ENCODE measurements at regions of chr1 and their contacts with region 1.

Region 1: DNA sequence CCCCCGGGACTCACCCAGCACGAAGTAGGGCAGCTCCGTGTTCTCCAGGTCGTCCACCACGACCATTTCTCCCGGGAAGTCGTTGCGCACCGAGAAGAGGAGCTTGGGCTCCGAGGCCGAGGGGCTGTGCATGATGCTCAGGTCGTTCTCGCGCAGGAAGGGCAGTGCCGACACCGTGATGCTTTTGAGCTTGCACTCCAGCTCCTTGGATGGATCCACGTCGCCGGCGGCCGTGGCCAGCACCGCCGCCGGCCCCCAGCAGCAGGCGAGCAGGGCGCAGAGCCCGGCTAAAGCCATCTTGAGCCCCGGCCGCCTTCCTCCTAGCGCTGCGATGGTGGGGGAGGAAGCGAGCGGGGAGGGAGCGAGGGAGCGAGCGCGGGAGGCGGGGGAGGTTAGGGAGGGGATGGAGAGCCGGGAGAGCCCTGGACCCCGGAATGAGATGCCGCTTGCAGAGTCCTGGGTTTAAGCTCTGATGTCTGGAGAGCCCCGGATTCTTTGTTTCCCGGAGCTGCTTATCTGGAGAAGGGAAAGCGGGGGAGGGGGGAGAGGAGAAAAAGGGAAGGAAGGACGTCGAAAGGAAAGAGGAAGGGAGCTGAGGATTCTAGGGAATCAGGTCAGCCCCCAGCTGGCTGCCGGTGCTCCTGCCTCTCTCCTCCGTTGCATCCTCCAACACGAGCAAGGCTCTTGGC is at the start of gene ASTN1:
- DNase-seq: peak in 1 of 2 experiments; percentile 78
- H3K4me3 ChIP-seq: peak within 1 kb of the TSS; percentile 80 to 86 (median 82)
- H3K27ac ChIP-seq: no peak within 1 kb of the TSS
- H3K4me1 ChIP-seq: peaks cover 0 to 5% (median 4%) of the 10 kb centered on the region in 4 experiments; a peak in 4 of 7 replicates
- H3K27me3 ChIP-seq: peaks cover 7 to 42% (median 34%) of the 10 kb centered on the region in 4 experiments
- CTCF ChIP-seq: no peak
- EP300 ChIP-seq: no peak
- POLR2A ChIP-seq: no peak
- RAD21 ChIP-seq: 0 out of 4 replicates have a peak, but pooled peaks of 1 of the 2 experiments have one; percentile 2
- total RNA-seq, gene ASTN1: 4.1 and 4.3 TPM in 2 replicates

Region 2: GRCh38 chr1:177106614-177107354 is 57.7 kb before region 1 on chr1:
- CTCF ChIA-PET with region 1: no interaction called
- POLR2A ChIA-PET with region 1: no interaction called
- DNase-seq: no peak
- H3K4me3 ChIP-seq: no peak overlapping the region
- H3K27ac ChIP-seq: no peak overlapping the region
- H3K4me1 ChIP-seq: no peaks in the 10 kb centered on the region
- H3K27me3 ChIP-seq: no peaks in the 10 kb centered on the region
- CTCF ChIP-seq: no peak
- EP300 ChIP-seq: no peak
- POLR2A ChIP-seq: no peak
- RAD21 ChIP-seq: no peak

Region 3: DNA sequence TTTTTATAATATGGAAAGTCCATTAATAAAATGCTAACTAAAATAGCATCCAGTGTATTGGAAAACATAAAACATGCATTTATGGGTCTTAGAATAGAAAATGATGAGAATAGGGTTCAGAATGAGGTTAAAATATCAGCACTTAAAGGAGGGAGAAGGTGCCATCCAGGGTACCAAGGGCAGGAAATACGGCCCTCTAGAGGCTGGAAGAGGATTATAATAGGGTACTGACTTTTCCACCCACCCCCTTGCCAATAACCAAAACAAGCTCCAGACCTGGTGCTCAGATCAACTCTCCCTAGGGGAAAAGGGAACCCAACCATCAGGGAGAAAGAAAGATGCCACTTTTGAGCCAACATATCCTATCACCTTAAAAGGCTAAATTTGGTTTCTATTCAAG is 26.7 kb before region 1 on chr1:
- CTCF ChIA-PET with region 1: interaction called, 13 read pairs
- POLR2A ChIA-PET with region 1: interaction called, 3 read pairs
- DNase-seq: no peak
- H3K4me3 ChIP-seq: no peak overlapping the region
- H3K27ac ChIP-seq: no peak overlapping the region
- H3K4me1 ChIP-seq: peaks cover 0 to 2% (median 1%) of the 10 kb centered on the region in 4 experiments; a peak in 2 of 7 replicates
- H3K27me3 ChIP-seq: no peaks in the 10 kb centered on the region
- CTCF ChIP-seq: peak; percentile 7 to 58 (median 49)
- EP300 ChIP-seq: no peak
- POLR2A ChIP-seq: no peak
- RAD21 ChIP-seq: peak; percentile 49 to 62

Region 4: GRCh38 chr1:177209357-177209756 is 44.8 kb after region 1 on chr1:
- CTCF ChIA-PET with region 1: no interaction called
- POLR2A ChIA-PET with region 1: no interaction called
- DNase-seq: no peak
- H3K4me3 ChIP-seq: no peak overlapping the region
- H3K27ac ChIP-seq: no peak overlapping the region
- H3K4me1 ChIP-seq: no peaks in the 10 kb centered on the region
- H3K27me3 ChIP-seq: peaks cover 12 to 29% (median 22%) of the 10 kb centered on the region in 4 experiments
- CTCF ChIP-seq: no peak
- EP300 ChIP-seq: no peak
- POLR2A ChIP-seq: no peak
- RAD21 ChIP-seq: no peak

Region 5: DNA sequence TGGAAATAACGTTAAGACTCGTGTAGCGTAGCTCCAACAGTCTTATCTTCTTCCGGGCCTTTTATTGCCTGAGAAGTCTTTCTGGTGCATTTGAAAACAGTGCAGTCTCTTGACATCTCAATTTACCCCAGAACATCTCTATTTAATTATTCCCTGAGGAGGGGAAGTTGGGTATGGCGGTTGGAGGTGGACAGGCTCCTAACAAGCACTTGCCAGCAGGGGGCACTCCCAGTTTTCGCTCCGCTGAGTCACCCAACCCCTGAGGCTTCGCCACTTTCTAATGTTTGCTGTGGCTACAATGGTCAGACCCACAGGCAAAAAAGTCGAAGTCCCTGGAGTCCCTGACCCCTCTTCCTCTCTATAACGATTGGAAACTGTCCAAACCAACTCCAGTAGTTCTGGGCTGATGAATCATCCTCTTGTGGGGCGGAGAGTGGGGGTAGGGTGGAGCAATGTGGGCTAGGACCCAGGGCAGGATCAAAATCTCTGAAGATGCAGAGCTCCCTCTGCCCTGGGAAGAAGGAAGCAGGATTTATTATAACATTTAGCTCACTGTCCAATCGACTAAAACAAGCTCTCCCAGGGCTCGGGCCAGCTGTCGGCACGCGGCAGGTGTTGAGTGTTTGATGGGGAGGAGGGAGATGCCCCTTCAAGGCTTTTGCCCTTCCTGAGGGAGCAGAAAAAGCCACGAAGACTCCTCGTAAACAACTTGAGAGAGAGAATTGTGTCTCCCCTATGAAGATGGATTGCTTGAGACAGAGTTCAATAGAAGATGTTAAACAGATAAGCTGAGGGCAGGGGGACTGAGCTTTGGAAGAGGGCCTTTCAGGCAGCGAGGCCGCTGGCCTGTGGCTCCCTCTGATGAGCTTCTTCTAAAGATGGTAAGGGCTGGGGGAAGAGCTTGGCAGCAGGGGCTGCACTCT is 91.9 kb after region 1 on chr1:
- CTCF ChIA-PET with region 1: no interaction called
- POLR2A ChIA-PET with region 1: no interaction called
- DNase-seq: peak; percentile 49 to 88
- H3K4me3 ChIP-seq: no peak overlapping the region
- H3K27ac ChIP-seq: no peak overlapping the region
- H3K4me1 ChIP-seq: peaks cover 0 to 4% (median 0%) of the 10 kb centered on the region in 4 experiments; a peak in 2 of 7 replicates
- H3K27me3 ChIP-seq: no peaks in the 10 kb centered on the region
- CTCF ChIP-seq: peak; percentile 63 to 70 (median 69)
- EP300 ChIP-seq: no peak
- POLR2A ChIP-seq: no peak
- RAD21 ChIP-seq: peak; percentile 79